ENCODE measurements at regions of chr6 and their contacts with region 1.

Region 1: DNA sequence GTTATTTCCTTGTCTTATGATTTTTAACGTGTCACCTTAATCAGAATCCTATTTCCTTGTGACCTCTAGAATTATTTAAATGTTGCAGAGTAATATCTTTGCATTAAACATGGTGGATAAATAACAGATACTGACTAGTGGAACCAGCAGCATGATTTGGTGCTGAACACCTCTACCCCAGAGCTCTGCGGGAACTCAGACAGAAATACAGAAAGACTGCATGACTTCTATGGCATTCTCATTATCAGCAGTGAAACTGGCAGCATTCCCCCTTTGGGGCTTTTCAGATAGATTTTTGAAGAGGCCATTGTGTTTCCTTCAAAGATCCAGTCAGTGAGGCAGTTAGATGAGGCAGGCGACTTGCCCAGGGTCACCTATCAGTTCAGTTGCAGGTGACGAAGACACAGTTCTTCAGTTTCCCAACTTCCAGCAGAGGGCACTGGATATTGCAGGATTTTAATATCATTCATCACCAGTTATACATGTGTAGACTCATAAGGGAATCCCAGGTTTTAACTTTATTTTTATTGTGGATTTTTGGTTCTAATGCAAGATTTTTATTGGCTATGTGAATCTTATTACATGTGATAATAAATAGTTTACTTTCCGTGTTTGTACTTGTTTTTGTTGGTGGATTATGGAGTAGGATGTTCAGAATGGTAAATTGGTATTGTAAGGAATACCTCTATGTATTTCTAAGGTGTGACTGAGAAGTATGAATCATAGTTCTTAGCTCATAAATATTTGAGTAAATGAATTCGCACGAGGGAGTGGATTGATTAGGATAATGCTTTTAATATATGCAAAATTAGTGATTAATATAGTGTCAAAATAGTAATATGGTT is 81.3 kb downstream of the AFDN start:
- DNase-seq: no peak

Region 2: GRCh38 chr6:167826230-167826895 is 81.7 kb before region 1 on chr6:
- intact Hi-C with region 1: loop called (anchors 10 kb)
- DNase-seq: peak; percentile 64 to 96 (median 76)

Region 3: DNA sequence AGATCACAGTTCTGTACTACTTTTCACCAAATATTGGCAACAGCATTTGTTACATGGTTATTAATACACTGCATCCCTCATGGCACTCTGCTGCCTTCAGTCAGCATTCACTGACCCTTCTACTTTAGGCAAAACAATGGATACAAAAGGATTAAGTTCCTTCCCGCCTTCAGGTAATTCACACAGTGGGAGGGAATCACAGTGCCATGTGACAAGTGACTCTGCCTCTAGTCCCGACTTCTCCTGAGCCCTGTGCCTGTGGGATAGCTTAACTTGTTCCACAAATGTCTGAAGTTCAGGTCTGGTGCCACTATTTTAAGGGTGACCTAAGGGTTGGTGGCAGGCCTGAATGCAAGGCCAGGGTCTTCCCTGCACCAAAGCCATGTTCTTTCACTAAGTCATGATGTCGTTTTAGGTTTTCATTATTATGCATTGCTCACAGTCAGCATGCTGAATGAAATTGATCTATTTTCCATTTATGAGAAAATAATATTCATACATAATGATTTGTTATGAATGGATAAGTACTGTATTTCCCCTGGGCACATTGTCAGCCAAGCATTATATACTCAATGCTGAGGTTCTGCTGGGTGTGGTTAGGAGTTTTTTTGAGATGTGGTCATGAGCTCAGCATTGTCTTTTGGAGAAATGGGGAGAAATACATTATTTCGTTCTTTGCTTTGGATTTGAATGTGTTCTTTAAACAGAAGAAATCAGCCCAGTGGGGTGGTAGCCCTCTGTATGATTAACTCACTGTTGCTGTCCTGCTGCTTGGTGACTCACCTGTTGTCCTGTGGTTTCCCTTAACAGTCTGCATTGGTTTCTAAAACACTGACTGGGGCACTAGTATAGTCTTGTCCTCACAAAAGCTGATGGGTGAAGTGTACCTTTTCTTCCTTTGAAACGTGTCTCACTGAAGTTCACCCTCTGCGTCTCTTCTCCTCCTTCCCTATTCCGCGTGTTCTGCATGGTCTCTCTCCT is 14.9 kb before region 1 on chr6:
- intact Hi-C with region 1: no loop called
- DNase-seq: no peak

Region 4: DNA sequence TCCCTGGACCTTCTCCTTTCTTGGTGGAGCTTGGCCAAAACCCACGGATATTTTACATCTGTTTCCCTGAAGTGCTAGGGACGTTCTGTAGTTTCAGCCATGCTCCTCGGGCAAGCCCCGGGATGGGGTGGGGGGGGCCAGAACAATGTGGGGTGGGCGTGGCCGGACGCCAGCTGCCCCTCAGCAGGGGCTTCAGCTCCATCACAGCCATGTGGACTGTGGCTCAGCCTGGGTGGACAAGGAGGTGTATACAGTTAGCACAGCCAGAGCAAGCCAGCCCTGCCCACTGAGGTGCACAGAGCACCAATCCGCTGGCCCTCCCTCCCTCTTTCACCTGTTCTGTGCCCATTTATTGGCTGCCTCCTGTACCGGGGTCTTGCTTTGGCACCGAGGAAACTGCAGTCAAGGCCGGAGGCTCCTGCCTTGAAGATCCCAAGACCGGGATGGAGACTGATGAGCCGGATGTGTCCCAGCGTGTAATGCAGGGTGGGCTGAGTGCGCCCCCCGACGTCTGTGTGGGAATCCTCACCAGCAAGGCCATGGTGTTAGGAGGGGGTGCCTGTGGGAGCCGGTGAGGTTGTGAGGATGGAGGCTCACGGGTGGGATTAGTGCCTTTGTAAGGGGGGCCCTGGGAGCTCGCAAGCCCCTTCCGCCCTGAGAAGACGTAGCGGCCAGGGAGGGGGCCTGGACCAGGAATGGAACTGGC is 143.0 kb after region 1 on chr6:
- intact Hi-C with region 1: loop called (anchors 10 kb)
- DNase-seq: peak in 3 of 10 donors; percentile 63 to 85 (median 76)

Region 5: GRCh38 chr6:168132531-168133167 is 224.6 kb after region 1 on chr6:
- intact Hi-C with region 1: loop called (anchors 1 kb)
- DNase-seq: peak; percentile 68 to 97 (median 83)

Region 6: DNA sequence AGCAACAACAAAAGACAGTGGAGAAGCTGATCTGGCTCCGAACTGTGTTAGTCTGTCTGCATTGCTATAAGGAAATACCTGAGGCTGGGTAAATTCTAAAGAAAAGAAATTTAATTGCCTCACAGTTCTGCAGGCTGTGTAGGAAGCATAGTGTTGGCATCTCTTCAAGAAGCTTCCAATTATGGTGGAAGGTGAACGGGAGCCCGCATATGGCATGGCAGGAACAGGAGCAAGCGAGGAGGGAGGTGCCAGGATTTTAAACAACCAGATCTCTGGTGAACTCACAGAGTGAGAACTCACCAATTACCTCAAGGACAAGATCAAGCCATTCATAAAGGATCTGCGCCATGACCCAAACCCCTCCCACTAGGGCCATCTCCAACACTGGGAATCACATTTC is 826.5 kb after region 1 on chr6:
- intact Hi-C with region 1: no loop called
- DNase-seq: no peak